Panc1 (cell line): ENCODE measurements at regions of chr1 and their contacts with region 1.

Region 1: GRCh38 chr1:19514391-19514831 is 29.1 kb upstream of the CAPZB start:
- DNase-seq: no peak
- ATAC-seq: no peak
- H3K4me3 ChIP-seq: no peak overlapping the region
- H3K27ac ChIP-seq: no peak overlapping the region
- H3K4me1 ChIP-seq: no peaks in the 10 kb centered on the region
- H3K27me3 ChIP-seq: no peaks in the 10 kb centered on the region
- CTCF ChIP-seq: no peak

Region 2: GRCh38 chr1:19384113-19384512 is 130.3 kb before region 1 on chr1:
- CTCF ChIA-PET with region 1: no interaction called
- POLR2A ChIA-PET with region 1: interaction called, 10 read pairs
- in situ Hi-C with region 1: no loop called
- intact Hi-C with region 1: no loop called
- DNase-seq: no peak
- ATAC-seq: no peak
- H3K4me3 ChIP-seq: no peak overlapping the region
- H3K27ac ChIP-seq: no peak overlapping the region
- H3K4me1 ChIP-seq: peaks cover 5% of the 10 kb centered on the region
- H3K27me3 ChIP-seq: no peaks in the 10 kb centered on the region
- CTCF ChIP-seq: no peak

Region 3: DNA sequence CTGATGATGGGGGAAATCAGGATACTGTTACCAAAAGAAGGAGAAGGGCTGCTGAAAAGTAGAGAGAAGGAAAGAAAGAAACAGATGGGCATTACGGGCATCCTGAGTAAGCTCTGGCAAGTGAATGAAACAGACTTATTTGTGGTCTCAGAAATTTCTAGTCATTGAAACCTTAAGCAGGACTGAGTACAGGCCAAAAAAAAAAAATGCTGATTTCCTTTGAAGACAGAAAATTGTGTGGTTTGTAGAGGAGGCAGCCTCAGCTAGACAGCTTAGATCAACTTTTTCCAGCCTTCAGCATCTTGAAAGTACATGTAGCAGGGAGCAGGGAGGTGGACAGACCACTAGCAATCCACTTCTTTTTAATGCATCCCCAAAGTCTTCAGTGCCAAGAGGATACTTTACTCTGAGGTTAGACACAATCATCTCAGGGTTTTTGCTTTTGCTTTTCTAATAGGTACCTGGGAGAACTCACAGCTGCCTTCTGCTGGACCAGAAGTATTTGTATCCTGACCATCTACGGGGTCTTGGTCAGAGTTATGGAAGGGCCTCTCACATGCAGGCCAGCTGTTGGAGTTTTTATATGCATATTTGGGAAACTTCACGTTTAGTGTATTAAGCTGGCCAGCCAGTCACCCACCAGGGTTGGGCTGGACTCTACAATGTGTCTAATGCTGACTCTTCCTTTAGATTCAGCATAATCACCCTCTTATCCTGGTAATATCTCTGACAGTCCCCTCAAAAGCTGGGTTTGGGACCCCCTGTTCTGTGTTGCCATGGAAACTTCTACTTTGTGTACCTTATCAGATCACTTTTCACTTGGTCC is 18.4 kb before region 1 on chr1:
- CTCF ChIA-PET with region 1: no interaction called
- POLR2A ChIA-PET with region 1: interaction called, 14 read pairs
- in situ Hi-C with region 1: no loop called
- intact Hi-C with region 1: no loop called
- DNase-seq: no peak
- ATAC-seq: no peak
- H3K4me3 ChIP-seq: no peak overlapping the region
- H3K27ac ChIP-seq: no peak overlapping the region
- H3K4me1 ChIP-seq: no peaks in the 10 kb centered on the region
- H3K27me3 ChIP-seq: no peaks in the 10 kb centered on the region
- CTCF ChIP-seq: no peak